Cardiac septum (tissue), 1 donor: ENCODE measurements at regions of chr17 and their contacts with region 1.

Region 1: DNA sequence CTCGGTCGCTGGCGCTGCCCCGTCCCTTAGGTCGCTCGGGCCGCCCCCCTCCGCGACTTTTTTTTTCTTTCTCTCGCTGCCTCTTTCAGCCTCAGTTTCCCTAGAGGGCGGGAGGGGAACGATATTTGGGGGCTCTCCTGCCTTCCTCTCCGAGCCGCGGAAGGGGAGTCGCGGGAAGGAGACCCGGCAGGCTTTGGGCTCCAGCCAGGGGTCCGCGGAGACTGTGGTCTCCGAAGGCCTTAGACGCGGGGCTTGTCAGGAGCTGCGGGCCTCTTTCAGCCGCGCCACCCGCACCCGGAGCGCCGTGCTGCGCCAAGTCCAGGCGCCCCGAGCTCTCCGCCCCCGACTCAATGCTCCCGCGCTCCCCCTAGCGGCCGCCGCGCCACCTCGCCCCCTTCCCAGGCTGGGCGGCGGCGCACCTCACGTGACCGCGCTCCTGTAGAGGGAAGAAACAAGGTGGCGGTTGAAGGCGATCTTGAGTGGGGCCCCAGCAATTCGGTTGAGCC is at the start of gene LRRC37B:
- DNase-seq: peak; percentile 97
- total RNA-seq, gene LRRC37B: 4.7 TPM

Region 2: DNA sequence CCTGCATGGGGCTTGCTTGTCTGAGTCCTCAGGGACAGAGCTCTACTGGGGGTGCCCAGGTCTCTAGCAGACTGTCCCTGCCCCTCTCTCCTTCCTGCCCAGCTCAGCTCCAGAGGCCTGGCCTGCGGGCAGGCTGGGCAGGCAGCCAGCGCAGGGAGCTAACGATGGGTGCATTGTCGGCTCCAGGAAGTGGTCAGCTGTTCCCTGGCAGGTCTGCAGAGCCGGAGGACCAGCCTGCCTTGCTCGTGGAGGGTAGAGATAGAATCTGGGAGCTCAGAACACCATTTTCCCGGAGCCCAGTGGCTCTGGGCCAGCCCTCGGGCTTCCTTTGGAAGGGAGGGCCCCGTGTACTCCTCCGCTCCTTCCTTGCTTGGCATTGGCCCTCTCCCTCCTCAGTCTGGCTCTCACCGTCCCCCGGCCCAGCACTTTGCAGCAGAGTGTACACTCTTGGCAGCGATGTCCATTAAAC is 426.0 kb before region 1 on chr17:
- intact Hi-C with region 1: no loop called
- DNase-seq: peak; percentile 90

Region 3: DNA sequence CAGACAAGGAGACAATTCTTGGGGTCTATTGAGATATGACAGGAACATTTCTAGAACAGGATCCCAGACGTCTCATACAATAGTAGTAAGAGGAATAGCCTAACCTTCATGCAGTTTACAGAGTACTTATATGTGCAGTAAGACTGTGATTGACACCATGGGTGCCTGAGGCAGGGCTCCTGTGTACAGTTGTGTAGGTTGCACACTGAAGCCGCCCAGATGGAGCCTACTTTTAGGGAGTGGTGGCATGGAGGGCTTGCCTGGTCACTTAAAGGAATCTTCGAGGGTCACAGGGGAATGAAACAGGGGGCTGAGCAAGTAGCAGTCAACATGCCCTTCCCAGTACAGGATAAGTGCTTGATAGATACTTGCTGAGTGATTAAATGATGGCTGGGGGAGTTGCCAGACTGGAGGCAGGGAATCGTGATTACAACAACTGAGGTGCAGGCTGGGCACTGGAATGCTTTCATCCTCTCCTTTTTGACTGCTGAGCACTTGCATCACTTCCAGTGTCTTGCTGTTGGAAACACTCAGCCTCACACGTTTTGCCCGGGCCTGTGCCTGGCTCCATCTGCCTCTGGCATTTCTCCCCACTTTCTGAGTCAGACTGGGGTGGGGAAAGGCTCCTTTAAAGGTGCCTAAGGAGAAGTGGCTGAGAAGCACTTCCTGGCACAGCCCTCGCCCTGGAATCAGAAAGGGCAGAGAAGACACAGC is 219.0 kb before region 1 on chr17:
- intact Hi-C with region 1: no loop called
- DNase-seq: no peak

Region 4: GRCh38 chr17:32020943-32021614 is 14.1 kb after region 1 on chr17:
- intact Hi-C with region 1: no loop called
- DNase-seq: no peak

Region 5: DNA sequence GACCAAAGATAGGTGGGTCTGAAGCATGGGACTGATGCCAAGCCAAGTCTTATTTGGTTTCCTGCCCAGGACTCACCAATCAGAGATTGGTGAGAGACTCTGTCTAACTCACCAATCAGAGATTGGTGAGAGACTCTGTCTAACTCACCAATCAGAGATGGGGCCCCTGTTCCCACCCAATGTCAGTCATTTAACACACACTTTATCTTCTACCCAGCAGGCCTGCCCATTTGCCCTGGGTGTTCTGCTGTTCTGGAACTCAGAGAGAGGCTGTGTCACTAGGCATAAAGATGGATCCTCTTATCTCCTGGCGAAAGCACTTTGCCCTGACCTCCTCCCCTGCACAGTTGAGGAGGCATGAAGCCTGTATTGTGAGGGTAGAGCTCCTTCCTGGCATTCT is 129.8 kb after region 1 on chr17:
- intact Hi-C with region 1: loop called (anchors 5 kb)
- DNase-seq: no peak